ENCODE measurements at regions of chr21 and their contacts with region 1.

Region 1: DNA sequence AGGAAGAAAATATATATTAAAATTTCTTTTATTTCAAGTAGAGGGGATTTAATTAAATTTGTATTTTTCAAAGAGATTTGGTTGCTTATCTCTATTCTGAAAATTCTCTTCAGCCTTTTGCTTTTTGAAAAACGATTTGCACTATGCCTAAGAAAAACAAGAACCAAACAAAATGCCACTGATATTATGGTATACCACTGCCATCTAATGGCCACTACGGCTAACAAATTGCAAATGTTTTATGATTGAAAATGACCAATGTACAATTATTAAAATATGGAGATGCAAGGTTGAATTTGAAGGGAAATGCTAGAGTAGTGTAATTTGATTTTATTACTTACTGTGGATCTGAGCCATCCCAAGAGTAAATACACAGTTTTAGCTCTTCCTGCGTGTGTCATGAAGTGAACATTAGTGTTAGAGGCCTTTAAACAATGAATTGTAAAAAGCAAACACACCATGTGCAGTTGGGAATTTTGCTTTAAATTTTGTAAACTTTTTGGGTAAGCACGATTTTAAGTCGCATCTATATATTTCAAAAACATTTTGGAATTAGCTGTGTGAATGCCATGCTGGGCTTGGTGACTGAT is 137.4 kb upstream of the USP25 start:
- DNase-seq: no peak
- H3K4me3 ChIP-seq: no peak overlapping the region
- H3K27ac ChIP-seq: no peak overlapping the region
- H3K27me3 ChIP-seq: no peaks in the 10 kb centered on the region
- CTCF ChIP-seq: peak; percentile 33 to 89 (median 71)

Region 2: GRCh38 chr21:14403681-14404318 is 1188.6 kb before region 1 on chr21:
- intact Hi-C with region 1: loop called in 1 of 2 experiments (anchors 10 kb)
- DNase-seq: no peak
- H3K4me3 ChIP-seq: no peak overlapping the region
- H3K27ac ChIP-seq: no peak overlapping the region
- H3K27me3 ChIP-seq: no peaks in the 10 kb centered on the region
- CTCF ChIP-seq: peak; percentile 30 to 79 (median 60)

Region 3: DNA sequence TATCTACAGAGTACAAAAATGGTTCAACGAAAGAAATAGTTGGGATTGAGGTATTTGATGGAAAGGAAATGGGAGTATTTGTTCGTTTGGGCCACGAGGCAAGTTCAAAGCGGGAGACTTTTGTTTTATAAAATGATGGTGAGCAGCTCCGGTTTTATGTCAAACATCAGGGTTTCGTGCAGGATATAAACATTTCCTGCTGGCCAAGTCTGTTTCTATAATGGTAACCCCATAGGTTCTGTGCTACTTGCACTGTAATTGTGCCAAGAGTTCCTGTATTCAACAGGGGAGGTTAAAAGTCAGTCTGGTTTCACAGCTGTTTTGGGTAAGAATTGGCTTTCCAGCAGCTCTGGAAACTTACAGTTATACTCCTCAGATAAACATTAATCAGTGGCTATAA is 237.3 kb before region 1 on chr21:
- intact Hi-C with region 1: no loop called
- DNase-seq: no peak
- H3K4me3 ChIP-seq: no peak overlapping the region
- H3K27ac ChIP-seq: no peak overlapping the region
- H3K27me3 ChIP-seq: no peaks in the 10 kb centered on the region
- CTCF ChIP-seq: no peak

Region 4: DNA sequence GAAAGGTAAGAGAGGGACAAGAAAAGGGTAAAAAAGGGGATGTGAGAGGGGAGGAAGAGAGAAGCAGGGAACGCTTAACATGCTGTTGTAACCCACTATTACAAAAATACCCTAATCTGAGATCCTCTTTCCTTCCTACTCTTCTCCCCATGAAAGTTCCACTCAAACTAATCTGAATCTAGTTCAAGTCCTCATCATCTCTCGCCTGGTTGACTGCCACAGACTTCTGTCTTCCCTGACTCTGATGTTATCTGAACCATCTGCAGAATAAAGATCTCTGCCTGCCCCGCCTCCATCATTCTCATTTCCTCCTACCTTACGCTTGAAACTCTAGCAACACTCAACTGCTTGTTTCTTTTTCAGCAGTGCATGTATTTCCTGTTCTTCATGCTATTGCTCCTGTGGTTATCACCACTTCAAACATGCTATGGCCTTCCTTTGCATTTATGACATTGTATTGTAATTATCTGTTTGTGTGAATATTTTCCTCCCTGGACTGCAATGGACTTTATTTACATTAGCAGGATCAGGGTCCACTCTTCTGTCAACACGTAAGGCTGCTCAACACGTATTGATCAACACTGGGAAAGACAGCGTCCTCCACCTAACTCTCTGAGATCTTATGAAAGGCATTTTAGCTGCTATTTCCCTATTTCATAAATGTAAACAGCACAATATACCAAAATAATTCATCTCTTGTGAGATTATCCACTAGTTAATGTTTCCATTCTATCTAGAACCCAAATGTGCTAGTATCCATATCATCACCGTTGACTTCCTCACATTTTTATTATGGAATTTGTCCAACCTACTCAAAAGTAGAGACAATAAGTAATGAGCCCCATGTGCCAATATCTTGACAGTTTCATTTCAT is 78.1 kb before region 1 on chr21:
- intact Hi-C with region 1: no loop called
- DNase-seq: no peak
- H3K4me3 ChIP-seq: no peak overlapping the region
- H3K27ac ChIP-seq: no peak overlapping the region
- H3K27me3 ChIP-seq: no peaks in the 10 kb centered on the region
- CTCF ChIP-seq: no peak